GM10248 (cell line): ENCODE measurements at regions of chr14 and their contacts with region 1.

Region 1: GRCh38 chr14:53217295-53217994 is 64.3 kb upstream of the DDHD1 start:
- DNase-seq: peak; percentile 82
- CTCF ChIP-seq: peak; percentile 29

Region 2: GRCh38 chr14:53190938-53191337 is 26.5 kb before region 1 on chr14:
- CTCF ChIA-PET with region 1: interaction called, 13 read pairs
- POLR2A ChIA-PET with region 1: no interaction called
- DNase-seq: peak; percentile 46
- CTCF ChIP-seq: no peak

Region 3: DNA sequence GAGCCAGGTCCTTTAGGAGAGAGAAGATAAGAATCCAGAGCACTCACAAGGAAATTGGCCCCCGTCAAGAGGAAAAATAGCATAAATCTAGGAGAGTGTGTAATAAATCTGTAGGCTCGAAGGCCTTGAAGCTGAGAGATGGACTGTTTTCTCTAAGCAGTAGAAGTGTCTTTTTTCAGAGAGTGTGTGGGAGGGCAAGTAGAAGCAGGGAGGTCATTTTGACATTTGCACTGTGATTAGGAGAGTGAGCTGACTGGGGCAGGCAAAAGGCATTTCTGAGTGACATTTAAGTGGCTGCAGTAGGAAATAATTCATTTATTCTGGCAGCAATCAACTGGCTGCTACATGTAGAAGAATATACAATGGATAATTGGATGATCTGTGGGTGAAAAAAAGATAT is 13.8 kb after region 1 on chr14:
- CTCF ChIA-PET with region 1: interaction called, 12 read pairs
- POLR2A ChIA-PET with region 1: no interaction called
- DNase-seq: no peak
- CTCF ChIP-seq: no peak

Region 4: DNA sequence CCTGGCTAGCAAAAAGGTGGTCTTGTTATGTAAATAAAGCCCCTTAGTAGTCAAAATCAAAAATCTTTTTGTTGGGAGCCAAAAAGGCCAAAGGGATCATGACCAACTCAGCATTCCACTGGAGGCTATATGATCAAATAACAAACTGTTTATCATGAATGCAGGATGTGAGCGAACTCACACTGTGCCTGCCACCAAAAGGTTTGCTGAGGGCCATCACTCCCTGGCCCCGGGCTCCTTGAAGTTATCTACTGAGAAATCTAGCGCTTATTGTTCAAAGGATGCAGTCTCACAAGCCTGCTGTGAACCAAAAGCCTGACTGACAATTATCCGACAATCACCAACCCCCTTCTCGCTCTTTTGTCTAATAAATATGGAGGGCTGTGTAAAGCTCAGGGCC is 42.8 kb after region 1 on chr14:
- CTCF ChIA-PET with region 1: no interaction called
- POLR2A ChIA-PET with region 1: no interaction called
- DNase-seq: no peak
- CTCF ChIP-seq: no peak

Region 5: GRCh38 chr14:53316499-53316898 is 99.1 kb after region 1 on chr14:
- CTCF ChIA-PET with region 1: no interaction called
- POLR2A ChIA-PET with region 1: no interaction called
- DNase-seq: no peak
- CTCF ChIP-seq: no peak

Region 6: DNA sequence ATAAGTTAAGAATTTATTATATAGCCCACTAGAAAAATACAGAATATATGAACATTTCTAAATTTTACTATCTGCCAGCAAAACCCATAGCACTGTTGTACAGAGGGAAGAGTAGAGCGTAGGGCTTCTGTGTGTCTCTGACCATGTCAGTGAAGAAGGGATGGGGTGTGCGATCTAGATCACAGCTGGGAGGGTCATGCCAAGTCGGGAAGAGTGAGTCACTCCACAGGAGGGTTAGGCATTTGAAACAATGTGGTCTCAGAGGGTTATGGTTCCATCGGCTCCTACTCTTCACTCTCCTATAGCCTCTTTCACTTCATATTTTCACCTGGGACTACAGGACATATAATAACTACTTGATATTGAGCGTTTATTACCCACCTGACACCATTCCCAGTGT is 120.7 kb after region 1 on chr14:
- CTCF ChIA-PET with region 1: no interaction called
- POLR2A ChIA-PET with region 1: no interaction called
- DNase-seq: no peak
- CTCF ChIP-seq: no peak